ENCODE measurements at regions of chr1 and their contacts with region 1.

Region 1: DNA sequence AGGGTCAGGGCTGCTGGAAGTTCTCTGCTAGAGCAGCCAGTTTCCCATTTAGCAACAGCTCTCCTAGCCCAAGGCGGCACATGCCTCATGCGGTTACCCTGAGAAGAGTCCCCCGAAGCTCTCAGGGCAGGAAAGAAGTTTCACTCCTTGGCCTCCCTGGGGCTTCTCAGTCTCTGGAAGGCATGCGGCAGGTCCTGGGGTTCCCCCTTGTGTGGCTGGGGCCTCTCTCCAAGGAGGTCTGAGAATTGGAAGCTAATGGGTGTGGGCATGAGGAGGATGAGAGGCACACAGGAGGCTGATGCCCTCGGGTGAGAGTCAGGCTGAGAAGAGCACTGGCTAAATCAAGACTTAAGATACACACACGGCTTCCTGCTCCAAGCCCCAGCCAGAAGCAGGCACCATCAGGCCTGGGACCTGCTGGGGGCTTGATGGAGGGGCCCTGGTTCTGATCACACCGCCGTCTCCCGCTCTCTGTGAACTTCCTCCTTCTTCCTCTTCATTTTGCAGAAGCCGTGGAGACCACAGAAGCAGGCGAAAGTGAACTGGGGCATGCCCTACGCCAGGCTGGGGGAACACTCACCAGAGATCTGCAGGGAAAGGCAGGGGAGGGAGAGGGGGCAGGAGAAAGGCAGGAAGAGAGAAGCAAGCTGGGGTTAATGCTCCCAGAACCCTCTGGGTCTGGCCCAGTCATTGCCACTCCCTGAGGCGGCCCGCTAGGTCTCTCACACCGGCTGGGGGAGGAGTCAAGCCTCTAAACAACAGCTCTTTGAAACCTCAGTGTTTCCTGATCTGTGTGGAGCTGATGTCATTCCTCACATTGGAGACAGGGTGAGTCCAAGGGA is 15.1 kb downstream of the BLACAT1 start:
- DNase-seq: peak; percentile 93
- H3K4me3 Mint-ChIP-seq: peak overlapping the region; percentile 1
- H3K27ac Mint-ChIP-seq: peak overlapping the region; percentile 77
- H3K4me1 Mint-ChIP-seq: peaks cover 25% of the 10 kb centered on the region
- H3K27me3 Mint-ChIP-seq: no peaks in the 10 kb centered on the region
- CTCF ChIP-seq: no peak

Region 2: DNA sequence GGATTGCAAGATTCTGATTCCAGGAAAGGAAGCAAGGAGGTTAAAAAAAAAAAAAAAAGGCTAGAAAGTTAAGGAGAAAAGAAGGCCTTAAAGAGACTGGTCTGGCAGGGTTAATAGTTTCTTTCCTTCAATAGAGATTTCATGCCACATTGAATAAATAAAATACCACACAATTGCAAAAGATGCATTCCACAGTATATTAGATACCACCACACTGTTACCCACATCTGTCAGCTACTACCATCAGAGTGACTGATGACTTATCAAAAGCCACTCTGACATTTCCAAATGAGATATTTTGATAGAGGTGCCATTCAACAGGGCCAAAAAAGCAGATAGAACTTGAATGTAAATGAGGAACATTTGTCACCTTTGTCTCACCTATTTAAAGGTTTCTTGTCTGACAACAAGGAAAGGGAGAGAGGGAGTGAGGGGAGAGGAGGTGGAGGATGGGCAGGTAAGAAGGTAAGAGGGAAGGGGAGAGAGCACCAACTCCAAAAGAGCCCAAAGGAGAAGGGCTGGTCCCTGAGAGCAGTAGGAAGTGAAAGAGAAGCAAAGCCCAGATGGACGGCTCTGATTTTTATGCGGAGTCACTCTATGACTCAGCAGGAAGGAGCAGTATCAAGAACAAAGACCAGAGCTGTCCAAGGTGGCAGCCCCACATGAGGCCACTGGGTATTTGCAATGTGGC is 793.4 kb before region 1 on chr1:
- CTCF ChIA-PET with region 1: no interaction called
- POLR2A ChIA-PET with region 1: no interaction called
- intact Hi-C with region 1: no loop called
- DNase-seq: peak; percentile 88
- H3K4me3 Mint-ChIP-seq: no peak overlapping the region
- H3K27ac Mint-ChIP-seq: no peak overlapping the region
- H3K4me1 Mint-ChIP-seq: peaks cover 8% of the 10 kb centered on the region
- H3K27me3 Mint-ChIP-seq: peaks cover 46% of the 10 kb centered on the region
- CTCF ChIP-seq: no peak

Region 3: DNA sequence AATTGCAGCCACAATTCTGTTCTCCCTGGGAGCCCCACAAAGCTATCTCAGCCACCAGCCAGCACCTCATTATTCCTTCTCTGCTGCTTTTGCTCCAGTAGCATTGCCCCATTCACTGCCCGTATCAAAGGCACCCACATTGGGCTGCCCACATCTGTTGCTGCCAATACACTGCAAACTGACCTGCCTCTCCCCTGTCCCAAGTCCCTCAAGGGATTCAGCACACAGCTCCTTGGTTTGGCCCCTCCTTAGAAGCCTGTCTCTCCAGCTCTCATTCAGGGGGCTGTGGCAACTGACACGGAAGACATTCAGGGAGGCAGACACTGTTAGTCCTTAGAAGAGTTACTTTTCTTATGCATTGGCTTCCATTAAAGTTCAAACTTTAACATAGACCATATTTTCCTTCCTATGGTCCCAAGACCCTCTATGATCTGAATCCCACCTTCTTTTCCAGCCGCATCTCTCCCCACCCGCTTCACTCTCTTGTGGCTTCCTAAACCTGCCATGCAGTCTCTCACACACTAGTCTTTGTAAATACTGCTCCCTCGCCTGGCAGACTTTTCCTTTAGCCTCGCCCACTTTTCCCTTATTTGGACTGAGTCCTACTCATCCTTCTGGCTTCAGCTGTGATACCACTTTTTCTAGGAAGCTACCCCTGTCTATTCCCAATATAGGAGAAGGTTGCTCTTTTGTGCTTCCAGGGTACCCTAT is 64.7 kb before region 1 on chr1:
- CTCF ChIA-PET with region 1: no interaction called
- POLR2A ChIA-PET with region 1: no interaction called
- intact Hi-C with region 1: no loop called
- DNase-seq: peak; percentile 90
- H3K4me3 Mint-ChIP-seq: no peak overlapping the region
- H3K27ac Mint-ChIP-seq: no peak overlapping the region
- H3K4me1 Mint-ChIP-seq: peaks cover 36% of the 10 kb centered on the region
- H3K27me3 Mint-ChIP-seq: no peaks in the 10 kb centered on the region
- CTCF ChIP-seq: no peak

Region 4: DNA sequence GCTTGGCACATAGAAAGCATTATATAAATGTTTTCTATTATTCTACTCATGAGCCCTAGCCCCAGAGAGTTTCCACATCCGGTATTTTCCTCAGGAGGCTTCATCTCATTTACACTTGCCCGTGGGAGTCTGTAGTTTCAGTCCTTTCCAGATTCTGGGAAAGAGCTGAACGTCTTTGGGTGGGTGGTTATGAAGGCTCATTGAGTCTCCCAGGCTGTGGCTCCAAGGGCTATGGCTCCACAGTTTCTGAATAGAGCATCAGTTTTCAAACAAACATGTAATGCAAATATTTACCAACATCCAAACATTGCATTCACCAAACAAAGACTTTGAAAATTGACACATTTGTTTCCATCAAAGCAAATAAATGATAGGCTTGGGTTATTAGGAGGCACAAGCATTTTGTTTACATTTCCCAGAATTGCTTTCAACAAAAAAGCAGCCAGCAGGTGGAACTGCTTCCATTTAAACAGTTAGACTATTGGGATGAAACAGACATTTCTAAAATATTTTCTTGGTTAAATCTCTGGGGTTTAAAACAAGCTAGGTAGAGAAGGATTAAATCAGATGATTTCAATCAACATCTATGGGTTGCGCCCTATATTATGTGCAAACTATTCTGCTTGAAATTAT is 17.6 kb before region 1 on chr1:
- CTCF ChIA-PET with region 1: interaction called, 50 read pairs
- POLR2A ChIA-PET with region 1: interaction called, 5 read pairs
- intact Hi-C with region 1: no loop called
- DNase-seq: no peak
- H3K4me3 Mint-ChIP-seq: no peak overlapping the region
- H3K27ac Mint-ChIP-seq: no peak overlapping the region
- H3K4me1 Mint-ChIP-seq: no peaks in the 10 kb centered on the region
- H3K27me3 Mint-ChIP-seq: peaks cover 67% of the 10 kb centered on the region
- CTCF ChIP-seq: peak; percentile 49

Region 5: DNA sequence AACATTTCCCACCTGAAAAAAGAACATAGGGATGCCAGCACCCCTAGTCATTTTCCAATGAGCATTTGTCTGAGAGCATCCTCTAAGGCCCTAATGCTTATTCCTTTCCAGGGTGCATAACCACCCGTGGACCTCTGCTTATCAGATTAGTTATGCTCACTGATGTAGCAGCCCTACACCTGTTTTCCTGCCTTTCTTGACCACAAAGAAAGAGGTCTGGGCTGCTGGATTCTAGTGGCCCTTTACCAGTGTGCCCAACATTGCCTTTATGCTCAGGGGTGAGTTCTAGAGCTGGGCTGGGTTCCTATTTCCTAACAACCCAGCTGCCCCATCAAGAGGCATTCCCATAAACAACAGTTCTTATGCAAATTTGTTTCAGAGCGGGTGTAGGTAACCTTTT is 429.5 kb after region 1 on chr1:
- CTCF ChIA-PET with region 1: no interaction called
- POLR2A ChIA-PET with region 1: no interaction called
- intact Hi-C with region 1: no loop called
- DNase-seq: no peak
- H3K4me3 Mint-ChIP-seq: no peak overlapping the region
- H3K27ac Mint-ChIP-seq: no peak overlapping the region
- H3K4me1 Mint-ChIP-seq: no peaks in the 10 kb centered on the region
- H3K27me3 Mint-ChIP-seq: no peaks in the 10 kb centered on the region
- CTCF ChIP-seq: no peak